CD4-positive, alpha-beta T cell (primary cell): ENCODE measurements at regions of chr4 and their contacts with region 1.

Region 1: DNA sequence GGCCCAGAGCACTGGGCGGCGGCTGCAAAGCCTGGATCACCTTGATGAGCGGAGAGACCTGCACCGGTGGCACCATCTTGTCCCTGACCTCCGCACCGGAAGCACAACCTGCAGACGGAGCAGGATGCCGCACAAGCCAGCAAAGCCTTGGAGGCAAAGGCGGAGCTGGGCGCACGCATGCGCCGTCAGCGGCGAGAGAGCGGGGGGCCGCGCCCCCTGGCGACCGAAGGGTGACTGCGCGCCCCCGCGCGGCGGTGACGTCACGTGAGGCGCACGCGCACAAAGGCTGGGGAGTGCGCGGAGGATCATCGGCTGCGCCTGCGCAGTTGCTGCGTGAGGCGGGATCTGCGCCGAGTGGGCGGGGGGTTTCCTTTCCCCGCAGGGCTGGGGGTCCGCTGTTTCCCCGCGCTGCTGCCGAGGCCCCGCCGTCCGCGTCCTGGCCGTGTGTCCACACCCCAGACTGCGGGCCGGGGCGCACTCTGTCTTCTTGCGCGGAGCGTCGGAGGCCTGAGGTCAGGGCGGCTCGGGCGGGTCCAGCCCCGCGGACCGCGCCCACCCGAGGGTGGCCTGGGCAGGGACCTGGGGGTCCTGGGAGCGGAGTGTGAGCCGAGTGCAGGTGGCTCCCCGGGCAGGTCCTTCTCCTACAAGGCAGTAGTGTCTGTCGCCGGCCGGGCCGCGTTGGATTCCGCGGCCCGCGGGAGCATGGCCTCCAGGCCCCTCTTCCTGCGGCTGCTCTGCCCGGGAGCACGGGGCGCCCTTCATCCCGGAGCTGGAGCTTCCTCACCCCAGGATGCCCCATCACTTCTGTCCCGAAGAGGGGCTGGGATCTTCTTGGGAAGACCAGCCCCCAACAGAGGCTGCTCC is at the starts of genes ATP5ME and MYL5:
- DNase-seq: peak; percentile 96 to 99 (median 97)
- ATAC-seq: peak; percentile 91
- H3K4me3 ChIP-seq: peak within 1 kb of the TSS; percentile 88
- H3K4me3 Mint-ChIP-seq: peak within 1 kb of the TSS; percentile 96
- H3K27ac ChIP-seq: peak within 1 kb of the TSS; percentile 85 to 98
- H3K27ac Mint-ChIP-seq: peak within 1 kb of the TSS; percentile 87
- H3K4me1 ChIP-seq: peaks cover 21% of the 10 kb centered on the region
- H3K4me1 Mint-ChIP-seq: peaks cover 4% of the 10 kb centered on the region
- H3K27me3 ChIP-seq: no peaks in the 10 kb centered on the region
- H3K27me3 Mint-ChIP-seq: no peaks in the 10 kb centered on the region
- CTCF ChIP-seq: peak; percentile 90
- total RNA-seq, gene ATP5ME: 109 to 126 TPM
- total RNA-seq, gene MYL5: 25.3 to 29.2 TPM

Region 2: DNA sequence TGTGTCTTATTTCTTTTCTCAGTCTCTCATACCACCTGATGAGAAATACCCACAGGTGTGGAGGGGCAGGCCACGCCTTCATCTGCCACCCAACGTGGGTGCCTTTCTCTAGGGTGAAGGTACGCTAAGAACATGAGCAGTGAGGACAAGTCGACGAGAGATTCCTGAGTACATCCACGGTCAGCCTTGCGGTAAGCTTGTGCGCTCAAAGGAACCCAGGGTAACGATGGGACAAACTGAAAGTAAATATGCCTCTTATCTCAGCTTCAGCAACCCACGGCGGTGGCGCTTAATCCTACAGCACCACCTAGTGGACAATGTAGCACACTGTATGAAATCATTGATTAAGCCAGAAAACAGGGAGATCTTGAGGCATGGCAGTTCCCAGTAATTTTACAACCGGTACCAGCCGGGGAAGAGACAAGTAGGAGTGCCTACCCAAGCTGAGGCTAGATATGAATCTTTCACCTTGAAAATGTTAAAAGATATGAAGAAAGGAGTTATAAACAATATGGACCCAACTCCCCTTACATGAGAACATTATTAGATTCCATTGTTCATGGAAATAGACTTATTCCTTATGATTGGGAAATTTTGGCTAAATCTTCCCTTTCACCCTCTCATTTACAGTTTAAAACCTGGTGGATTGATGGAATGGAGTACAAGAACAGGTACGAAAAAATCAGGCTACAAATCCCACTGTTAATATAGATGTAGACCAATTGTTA is 432.1 kb before region 1 on chr4:
- CTCF ChIA-PET with region 1: interaction called, 6 read pairs
- POLR2A ChIA-PET with region 1: no interaction called
- intact Hi-C with region 1: loop called in 1 of 2 experiments (anchors 2 kb)
- DNase-seq: peak; percentile 40 to 88 (median 59)
- ATAC-seq: peak; percentile 95
- H3K4me3 ChIP-seq: peak overlapping the region; percentile 54
- H3K4me3 Mint-ChIP-seq: peak overlapping the region; percentile 89
- H3K27ac ChIP-seq: peak overlapping the region in 1 of 2 donors; percentile 29
- H3K27ac Mint-ChIP-seq: peak overlapping the region; percentile 54
- H3K4me1 ChIP-seq: peaks cover 6% of the 10 kb centered on the region
- H3K4me1 Mint-ChIP-seq: peaks cover 11% of the 10 kb centered on the region
- H3K27me3 ChIP-seq: no peaks in the 10 kb centered on the region
- H3K27me3 Mint-ChIP-seq: no peaks in the 10 kb centered on the region
- CTCF ChIP-seq: peak; percentile 91

Region 3: DNA sequence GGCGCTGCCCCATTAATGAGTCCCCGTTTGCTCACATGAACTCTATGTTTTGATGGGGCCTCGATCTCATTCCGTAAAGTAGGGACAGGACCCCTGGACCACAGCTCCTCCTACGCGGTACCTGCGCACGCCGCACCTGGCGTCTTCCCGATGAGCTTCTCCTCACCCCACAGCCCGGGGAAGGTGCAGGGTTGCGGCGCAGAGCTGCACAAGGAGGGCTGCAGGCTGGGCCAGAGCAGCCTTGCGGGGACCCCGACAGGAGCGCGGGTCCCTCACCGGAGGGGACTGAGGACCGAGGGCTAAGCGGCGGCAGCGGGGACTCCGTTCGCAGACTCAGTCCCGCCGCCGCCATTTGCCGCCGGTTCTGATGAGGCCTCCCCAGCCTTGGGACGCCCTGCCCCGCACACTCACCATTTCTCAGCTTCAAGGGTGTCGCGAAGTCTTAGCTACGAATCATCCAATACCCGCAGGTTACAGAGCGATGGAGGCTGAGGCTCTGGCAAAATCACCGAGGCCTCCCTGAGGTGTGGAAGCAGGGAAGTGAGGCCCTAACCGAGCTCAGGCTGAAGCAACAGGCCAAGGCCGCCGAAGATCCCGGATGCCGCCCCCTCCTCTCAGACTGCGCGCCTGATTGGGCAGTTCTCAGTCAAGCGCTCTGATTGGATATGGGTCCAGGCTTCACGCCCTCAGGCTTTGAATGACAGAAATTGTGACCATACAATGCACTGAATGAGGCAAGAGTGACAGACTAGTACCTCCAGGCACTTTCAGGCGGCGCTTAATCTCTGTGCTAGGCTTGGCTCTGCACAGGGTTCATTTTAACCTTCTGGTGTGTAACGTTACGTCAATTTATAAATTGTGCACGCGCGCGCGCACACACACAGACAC is 200.6 kb before region 1 on chr4:
- CTCF ChIA-PET with region 1: no interaction called
- POLR2A ChIA-PET with region 1: interaction called, 16 read pairs
- intact Hi-C with region 1: no loop called
- DNase-seq: peak; percentile 84 to 99 (median 89)
- ATAC-seq: peak; percentile 97
- H3K4me3 ChIP-seq: peak overlapping the region; percentile 82
- H3K4me3 Mint-ChIP-seq: peak overlapping the region; percentile 98
- H3K27ac ChIP-seq: peak overlapping the region; percentile 81 to 93
- H3K27ac Mint-ChIP-seq: peak overlapping the region; percentile 100
- H3K4me1 ChIP-seq: peaks cover 17% of the 10 kb centered on the region
- H3K4me1 Mint-ChIP-seq: peaks cover 43% of the 10 kb centered on the region
- H3K27me3 ChIP-seq: no peaks in the 10 kb centered on the region
- H3K27me3 Mint-ChIP-seq: no peaks in the 10 kb centered on the region
- CTCF ChIP-seq: no peak

Region 4: GRCh38 chr4:663438-664428 is 10.7 kb before region 1 on chr4:
- CTCF ChIA-PET with region 1: interaction called, 5 read pairs
- POLR2A ChIA-PET with region 1: interaction called, 64 read pairs
- intact Hi-C with region 1: no loop called
- DNase-seq: peak; percentile 60 to 84 (median 76)
- ATAC-seq: peak; percentile 87
- H3K4me3 ChIP-seq: peak overlapping the region; percentile 86
- H3K4me3 Mint-ChIP-seq: peak overlapping the region; percentile 88
- H3K27ac ChIP-seq: peak overlapping the region; percentile 59 to 62
- H3K27ac Mint-ChIP-seq: peak overlapping the region; percentile 80
- H3K4me1 ChIP-seq: peaks cover 22% of the 10 kb centered on the region
- H3K4me1 Mint-ChIP-seq: peaks cover 10% of the 10 kb centered on the region
- H3K27me3 ChIP-seq: no peaks in the 10 kb centered on the region
- H3K27me3 Mint-ChIP-seq: no peaks in the 10 kb centered on the region
- CTCF ChIP-seq: no peak

Region 5: DNA sequence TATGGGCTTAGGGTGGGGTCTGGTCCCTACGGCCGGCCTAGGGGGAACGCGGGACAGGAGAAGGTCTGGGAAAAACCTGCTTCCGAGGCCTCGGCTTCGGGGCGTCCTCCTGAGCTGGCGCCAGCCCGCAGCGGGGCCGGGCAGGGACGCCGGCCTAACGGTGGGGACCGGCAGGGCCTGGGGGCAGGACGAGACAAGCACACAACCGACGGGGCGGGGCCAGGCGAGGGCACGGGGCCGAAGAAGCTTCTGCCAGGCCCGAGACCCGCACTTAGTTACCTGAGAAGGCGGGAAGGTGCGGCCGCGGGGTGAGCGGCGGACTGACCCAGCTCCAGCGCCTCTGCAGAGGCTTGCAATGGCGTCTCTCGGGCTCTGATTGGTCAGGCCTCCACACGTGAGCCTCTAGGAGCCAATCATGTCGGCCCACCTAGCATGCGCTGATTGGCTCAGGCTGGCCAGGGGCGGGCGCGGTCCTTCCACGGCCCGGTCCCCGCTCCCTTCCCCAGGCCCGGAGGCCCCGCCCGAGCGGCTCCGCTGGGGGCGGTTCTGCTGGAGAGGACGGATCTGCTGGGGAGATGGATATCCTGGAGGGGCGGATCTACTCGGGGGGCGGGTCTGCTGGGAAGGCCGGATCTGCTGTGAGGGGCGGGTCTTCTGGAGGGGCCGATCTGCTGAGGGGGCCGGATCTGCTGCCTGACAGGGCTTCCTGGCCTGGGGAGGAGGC is 107.3 kb after region 1 on chr4:
- CTCF ChIA-PET with region 1: no interaction called
- POLR2A ChIA-PET with region 1: interaction called, 9 read pairs
- intact Hi-C with region 1: loop called in 1 of 2 experiments (anchors 5 kb)
- DNase-seq: peak; percentile 96 to 99 (median 98)
- ATAC-seq: peak; percentile 91
- H3K4me3 ChIP-seq: peak overlapping the region; percentile 97
- H3K4me3 Mint-ChIP-seq: peak overlapping the region; percentile 97
- H3K27ac ChIP-seq: peak overlapping the region; percentile 80 to 90
- H3K27ac Mint-ChIP-seq: peak overlapping the region; percentile 95
- H3K4me1 ChIP-seq: peaks cover 65% of the 10 kb centered on the region
- H3K4me1 Mint-ChIP-seq: peaks cover 58% of the 10 kb centered on the region
- H3K27me3 ChIP-seq: peaks cover 16 to 32% of the 10 kb centered on the region in 2 experiments
- H3K27me3 Mint-ChIP-seq: peaks cover 23% of the 10 kb centered on the region
- CTCF ChIP-seq: no peak

Region 6: GRCh38 chr4:986879-987623 is 312.6 kb after region 1 on chr4 and contains the start of gene IDUA:
- CTCF ChIA-PET with region 1: no interaction called
- POLR2A ChIA-PET with region 1: interaction called, 4 read pairs
- intact Hi-C with region 1: loop called in 1 of 2 experiments (anchors 10 kb)
- DNase-seq: peak; percentile 73 to 93 (median 86)
- ATAC-seq: peak; percentile 84
- H3K4me3 ChIP-seq: peak within 1 kb of the TSS; percentile 78
- H3K4me3 Mint-ChIP-seq: peak within 1 kb of the TSS; percentile 94
- H3K27ac ChIP-seq: peak within 1 kb of the TSS; percentile 41 to 46
- H3K27ac Mint-ChIP-seq: peak within 1 kb of the TSS; percentile 82
- H3K4me1 ChIP-seq: peaks cover 36% of the 10 kb centered on the region
- H3K4me1 Mint-ChIP-seq: peaks cover 25% of the 10 kb centered on the region
- H3K27me3 ChIP-seq: no peaks in the 10 kb centered on the region
- H3K27me3 Mint-ChIP-seq: no peaks in the 10 kb centered on the region
- CTCF ChIP-seq: peak; percentile 57
- total RNA-seq, gene IDUA: 70.2 to 77.8 TPM